HCT116 (cell line): ENCODE measurements at regions of chr2 and their contacts with region 1.

Region 1: GRCh38 chr2:105545730-105546627 is 147.1 kb upstream of the FHL2 start:
- DNase-seq: peak; percentile 46
- ATAC-seq: peak; percentile 90
- H3K4me3 ChIP-seq: no peak overlapping the region
- H3K27ac ChIP-seq: no peak overlapping the region
- H3K4me1 ChIP-seq: peaks cover 0 to 8% of the 10 kb centered on the region in 2 experiments; a peak in 1 of 4 replicates
- H3K27me3 ChIP-seq: no peaks in the 10 kb centered on the region; the same call in 1 of the 2 replicates
- CTCF ChIP-seq: peak; percentile 79 to 92 (median 83)
- POLR2A ChIP-seq: no peak
- RAD21 ChIP-seq: peak; percentile 73

Region 2: GRCh38 chr2:105287692-105288091 is 258.3 kb before region 1 on chr2:
- CTCF ChIA-PET with region 1: no interaction called
- POLR2A ChIA-PET with region 1: no interaction called
- RAD21 ChIA-PET with region 1: no interaction called
- intact Hi-C with region 1: loop called (anchors 5 kb)
- DNase-seq: peak; percentile 16
- ATAC-seq: peak; percentile 74
- H3K4me3 ChIP-seq: no peak overlapping the region
- H3K27ac ChIP-seq: no peak overlapping the region
- H3K4me1 ChIP-seq: no peaks in the 10 kb centered on the region
- H3K27me3 ChIP-seq: no peaks in the 10 kb centered on the region
- CTCF ChIP-seq: peak; percentile 42 to 65 (median 61); a peak in 5 of 6 replicates
- POLR2A ChIP-seq: no peak
- RAD21 ChIP-seq: peak; percentile 51